ENCODE measurements at regions of chr19 and their contacts with region 1.

Region 1: GRCh38 chr19:40798223-40798996 is 581 bp upstream of the EGLN2 start:
- DNase-seq: peak; percentile 100
- ATAC-seq: peak; percentile 82 to 94 (median 86)
- H3K4me3 ChIP-seq: peak overlapping the region; percentile 55
- H3K4me3 Mint-ChIP-seq: peak overlapping the region; percentile 99
- H3K27ac ChIP-seq: peak overlapping the region; percentile 91
- H3K27ac Mint-ChIP-seq: peak overlapping the region; percentile 100
- H3K4me1 ChIP-seq: peaks cover 51% of the 10 kb centered on the region
- H3K4me1 Mint-ChIP-seq: peaks cover 45 to 53% of the 10 kb centered on the region in 2 donors
- H3K27me3 ChIP-seq: no peaks in the 10 kb centered on the region
- H3K27me3 Mint-ChIP-seq: no peaks in the 10 kb centered on the region
- CTCF ChIP-seq: peak; percentile 47

Region 2: DNA sequence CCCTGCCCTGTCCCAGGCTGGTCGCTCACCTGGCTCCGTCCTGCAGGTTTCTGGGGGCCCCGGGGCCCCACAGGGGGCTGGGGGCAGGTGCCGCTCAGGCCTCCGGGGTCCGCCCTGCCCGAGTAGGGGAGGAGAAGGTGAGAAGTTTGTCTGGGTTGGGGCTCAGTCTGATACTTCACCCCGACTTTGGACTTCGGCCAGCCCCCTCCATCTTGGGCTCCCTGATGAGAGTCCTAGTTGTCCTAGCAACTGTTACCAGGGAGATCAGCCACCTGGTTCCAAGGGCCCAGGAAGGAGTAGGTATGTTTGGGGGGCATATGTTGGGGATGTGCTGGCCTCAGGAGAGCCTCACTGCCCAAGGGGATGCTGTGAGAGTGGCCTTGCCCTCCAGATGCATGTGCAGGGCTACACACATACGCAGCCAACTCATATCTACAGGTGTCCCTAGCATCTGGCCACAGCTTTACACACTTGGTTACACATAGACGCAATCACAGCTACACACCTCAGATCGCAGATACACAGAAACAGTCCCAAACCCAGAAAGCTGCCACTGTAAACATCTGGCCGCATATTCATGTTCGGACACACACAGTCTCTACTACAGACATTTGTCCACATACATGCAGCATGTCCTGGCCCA is 111.4 kb before region 1 on chr19:
- intact Hi-C with region 1: no loop called
- DNase-seq: no peak
- ATAC-seq: no peak
- H3K4me3 ChIP-seq: no peak overlapping the region
- H3K4me3 Mint-ChIP-seq: no peak overlapping the region
- H3K27ac ChIP-seq: peak overlapping the region; percentile 64
- H3K27ac Mint-ChIP-seq: no peak overlapping the region
- H3K4me1 ChIP-seq: peaks cover 45% of the 10 kb centered on the region
- H3K4me1 Mint-ChIP-seq: peaks cover 0 to 28% of the 10 kb centered on the region in 2 donors
- H3K27me3 ChIP-seq: no peaks in the 10 kb centered on the region
- H3K27me3 Mint-ChIP-seq: no peaks in the 10 kb centered on the region
- CTCF ChIP-seq: no peak

Region 3: GRCh38 chr19:40750059-40750873 is 48.1 kb before region 1 on chr19 and contains the start of gene ACTMAP:
- intact Hi-C with region 1: loop called (anchors 1 kb)
- DNase-seq: peak; percentile 100
- ATAC-seq: peak; percentile 87 to 96 (median 88)
- H3K4me3 ChIP-seq: peak within 1 kb of the TSS; percentile 73
- H3K4me3 Mint-ChIP-seq: peak within 1 kb of the TSS; percentile 99
- H3K27ac ChIP-seq: peak within 1 kb of the TSS; percentile 92
- H3K27ac Mint-ChIP-seq: peak within 1 kb of the TSS; percentile 92 to 95
- H3K4me1 ChIP-seq: peaks cover 52% of the 10 kb centered on the region
- H3K4me1 Mint-ChIP-seq: peaks cover 43 to 53% of the 10 kb centered on the region in 2 donors
- H3K27me3 ChIP-seq: no peaks in the 10 kb centered on the region
- H3K27me3 Mint-ChIP-seq: no peaks in the 10 kb centered on the region
- CTCF ChIP-seq: no peak
- total RNA-seq, gene ACTMAP: 5.9 to 9.6 (median 8.2) TPM

Region 4: GRCh38 chr19:40831502-40832442 is 33.4 kb after region 1 on chr19:
- intact Hi-C with region 1: loop called (anchors 1 kb)
- DNase-seq: peak in 1 of 2 donors; percentile 2
- ATAC-seq: no peak
- H3K4me3 ChIP-seq: no peak overlapping the region
- H3K4me3 Mint-ChIP-seq: no peak overlapping the region
- H3K27ac ChIP-seq: no peak overlapping the region
- H3K27ac Mint-ChIP-seq: peak overlapping the region; percentile 27 to 85
- H3K4me1 ChIP-seq: peaks cover 16% of the 10 kb centered on the region
- H3K4me1 Mint-ChIP-seq: peaks cover 19 to 32% of the 10 kb centered on the region in 2 donors
- H3K27me3 ChIP-seq: no peaks in the 10 kb centered on the region
- H3K27me3 Mint-ChIP-seq: no peaks in the 10 kb centered on the region
- CTCF ChIP-seq: no peak

Region 5: DNA sequence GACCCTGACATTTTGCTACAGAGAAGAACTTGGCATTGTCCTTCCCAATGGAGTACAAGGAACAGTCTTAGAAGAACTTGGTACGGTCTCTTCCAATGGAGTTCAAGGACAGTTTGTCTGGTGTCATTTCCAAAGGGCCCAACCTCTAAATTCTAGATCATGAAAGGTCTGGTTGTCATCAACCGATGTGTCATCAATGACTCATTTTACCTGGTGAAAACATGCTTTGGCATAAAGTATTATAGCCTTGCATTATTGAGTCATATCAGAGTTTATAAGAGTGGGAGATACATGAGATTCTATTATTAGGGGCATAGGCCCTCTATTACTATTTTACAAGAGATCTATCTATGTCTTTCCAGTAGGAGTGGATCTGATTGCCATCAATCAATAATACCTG is 196.9 kb after region 1 on chr19:
- intact Hi-C with region 1: no loop called
- DNase-seq: no peak
- ATAC-seq: no peak
- H3K4me3 ChIP-seq: no peak overlapping the region
- H3K4me3 Mint-ChIP-seq: no peak overlapping the region
- H3K27ac ChIP-seq: no peak overlapping the region
- H3K27ac Mint-ChIP-seq: no peak overlapping the region
- H3K4me1 ChIP-seq: no peaks in the 10 kb centered on the region
- H3K4me1 Mint-ChIP-seq: no peaks in the 10 kb centered on the region
- H3K27me3 ChIP-seq: no peaks in the 10 kb centered on the region
- H3K27me3 Mint-ChIP-seq: peaks cover 20 to 38% of the 10 kb centered on the region in 2 donors
- CTCF ChIP-seq: no peak

Region 6: DNA sequence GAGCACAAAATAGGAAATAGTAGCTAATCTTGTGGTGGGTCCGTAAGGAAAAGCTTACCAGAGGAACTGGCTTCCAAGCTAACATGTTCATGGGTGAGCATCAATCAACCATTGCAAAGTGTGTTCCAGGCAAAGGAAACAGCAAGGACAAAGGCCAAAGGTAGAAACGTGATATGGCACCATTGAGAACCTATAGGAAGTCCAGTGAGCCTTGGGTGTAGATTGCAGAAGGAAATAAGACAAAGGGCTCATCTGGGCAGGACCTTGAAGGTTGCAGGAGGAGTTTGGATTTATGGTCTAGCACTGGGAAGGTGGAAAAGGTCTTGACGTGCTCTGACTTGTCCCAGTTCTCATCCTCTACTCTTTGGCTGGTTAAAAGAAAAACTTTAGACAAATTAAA is 214.9 kb after region 1 on chr19:
- intact Hi-C with region 1: no loop called
- DNase-seq: no peak
- ATAC-seq: no peak
- H3K4me3 ChIP-seq: no peak overlapping the region
- H3K4me3 Mint-ChIP-seq: no peak overlapping the region
- H3K27ac ChIP-seq: no peak overlapping the region
- H3K27ac Mint-ChIP-seq: no peak overlapping the region
- H3K4me1 ChIP-seq: no peaks in the 10 kb centered on the region
- H3K4me1 Mint-ChIP-seq: no peaks in the 10 kb centered on the region
- H3K27me3 ChIP-seq: no peaks in the 10 kb centered on the region
- H3K27me3 Mint-ChIP-seq: peaks cover 33 to 41% of the 10 kb centered on the region in 2 donors
- CTCF ChIP-seq: no peak

Region 7: GRCh38 chr19:41083516-41083915 is 285.1 kb after region 1 on chr19:
- intact Hi-C with region 1: no loop called
- DNase-seq: no peak
- ATAC-seq: no peak
- H3K4me3 ChIP-seq: no peak overlapping the region
- H3K4me3 Mint-ChIP-seq: no peak overlapping the region
- H3K27ac ChIP-seq: no peak overlapping the region
- H3K27ac Mint-ChIP-seq: no peak overlapping the region
- H3K4me1 ChIP-seq: no peaks in the 10 kb centered on the region
- H3K4me1 Mint-ChIP-seq: no peaks in the 10 kb centered on the region
- H3K27me3 ChIP-seq: peaks cover 2% of the 10 kb centered on the region
- H3K27me3 Mint-ChIP-seq: peaks cover 39 to 56% of the 10 kb centered on the region in 2 donors
- CTCF ChIP-seq: no peak